ENCODE measurements at regions of chr12 and their contacts with region 1.

Region 1: GRCh38 chr12:66107451-66107915 is 23.1 kb downstream of the LLPH start:
- DNase-seq: peak; percentile 39 to 46
- H3K4me3 ChIP-seq: no peak overlapping the region
- H3K27ac ChIP-seq: no peak overlapping the region
- H3K4me1 ChIP-seq: no peaks in the 10 kb centered on the region
- H3K27me3 ChIP-seq: no peaks in the 10 kb centered on the region
- CTCF ChIP-seq: peak; percentile 37 to 80 (median 78)
- POLR2A ChIP-seq: no peak

Region 2: DNA sequence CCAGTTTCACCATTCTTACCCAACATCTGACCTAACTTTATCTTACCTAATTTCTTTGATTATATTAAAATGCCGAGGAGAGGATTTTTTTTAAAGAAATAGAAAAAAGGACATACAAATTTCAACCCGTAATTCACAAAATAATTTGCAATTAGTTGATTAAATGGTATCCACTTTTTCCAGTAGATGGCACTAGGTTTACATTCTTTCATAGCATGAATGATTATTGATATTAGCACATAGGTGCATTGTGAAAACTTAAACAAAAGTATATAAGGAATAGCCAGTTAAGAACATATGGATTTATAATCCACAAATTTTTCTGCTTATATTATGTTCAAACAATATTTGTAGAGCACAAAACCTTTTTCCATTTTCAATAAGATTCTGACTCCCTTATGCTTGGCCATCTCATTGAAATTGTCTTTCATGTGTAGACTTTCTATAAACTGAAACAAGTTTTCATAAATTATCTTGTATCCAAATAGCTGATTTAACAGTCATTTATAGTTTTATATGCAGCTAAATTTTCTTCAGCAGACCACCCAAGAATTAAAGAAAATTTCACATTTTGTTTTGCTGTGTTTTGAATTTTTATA is 793.7 kb before region 1 on chr12:
- intact Hi-C with region 1: loop called (anchors 10 kb)
- DNase-seq: no peak
- H3K4me3 ChIP-seq: no peak overlapping the region
- H3K27ac ChIP-seq: no peak overlapping the region
- H3K4me1 ChIP-seq: no peaks in the 10 kb centered on the region
- H3K27me3 ChIP-seq: no peaks in the 10 kb centered on the region
- CTCF ChIP-seq: peak in 4 of 6 experiments; percentile 13 to 71 (median 62)
- POLR2A ChIP-seq: no peak

Measured in thyroid gland (tissue), 4 donors.